Activated CD4-positive, alpha-beta T cell treated with anti-CD3 and anti-CD28 coated beads for 36 hours (primary cell): ENCODE measurements at regions of chr16 and their contacts with region 1.

Region 1: GRCh38 chr16:72501739-72502593 is 330.0 kb upstream of the PMFBP1 start:
- DNase-seq: peak; percentile 67
- ATAC-seq: peak; percentile 68
- H3K4me3 Mint-ChIP-seq: no peak overlapping the region
- H3K27ac Mint-ChIP-seq: no peak overlapping the region
- H3K4me1 Mint-ChIP-seq: no peaks in the 10 kb centered on the region
- H3K27me3 Mint-ChIP-seq: no peaks in the 10 kb centered on the region

Region 2: GRCh38 chr16:71956486-71956885 is 545.5 kb before region 1 on chr16:
- CTCF ChIA-PET with region 1: no interaction called
- POLR2A ChIA-PET with region 1: no interaction called
- intact Hi-C with region 1: no loop called
- DNase-seq: no peak
- ATAC-seq: no peak
- H3K4me3 Mint-ChIP-seq: no peak overlapping the region
- H3K27ac Mint-ChIP-seq: no peak overlapping the region
- H3K4me1 Mint-ChIP-seq: peaks cover 21% of the 10 kb centered on the region
- H3K27me3 Mint-ChIP-seq: no peaks in the 10 kb centered on the region

Region 3: DNA sequence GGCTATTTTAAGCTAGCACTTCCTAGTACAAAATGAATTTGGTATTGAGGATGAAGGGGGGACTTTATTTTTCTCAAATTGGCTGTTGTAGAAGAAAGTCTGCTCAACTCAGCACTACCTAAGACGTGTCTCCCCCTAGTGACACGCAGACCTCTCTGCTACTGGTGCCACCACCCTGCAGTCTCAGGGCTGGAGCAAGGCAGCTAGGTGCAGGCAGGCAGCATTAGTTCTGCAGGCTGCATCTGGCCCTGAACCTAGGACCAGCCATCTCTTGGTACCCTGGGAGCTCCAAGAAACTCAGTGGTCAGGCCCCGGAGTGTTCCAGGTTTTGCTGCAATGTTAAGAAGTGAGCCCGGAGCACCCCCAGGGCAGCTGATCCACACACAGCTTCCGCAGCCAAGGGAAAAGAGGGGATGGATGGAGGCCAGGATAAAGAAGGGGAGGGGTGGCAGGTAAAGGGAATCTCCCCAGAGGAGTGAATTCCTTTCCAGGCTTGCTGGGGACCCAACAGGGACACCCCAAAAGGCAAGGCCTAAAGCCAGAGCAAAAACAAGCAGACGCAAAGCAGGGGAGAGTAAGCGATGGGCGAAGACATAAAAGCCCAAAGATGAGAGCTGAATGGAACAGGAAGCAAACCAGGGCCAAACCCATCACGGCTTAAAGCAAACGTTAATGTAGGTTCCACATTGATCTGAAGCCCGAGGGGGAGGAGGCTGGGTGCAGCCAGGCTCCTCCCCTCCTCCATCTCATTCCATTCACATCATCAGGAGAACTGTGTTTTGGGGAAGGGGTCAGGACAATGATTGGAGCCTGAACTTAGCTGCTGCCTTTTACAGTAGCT is 345.4 kb after region 1 on chr16:
- CTCF ChIA-PET with region 1: no interaction called
- POLR2A ChIA-PET with region 1: no interaction called
- intact Hi-C with region 1: loop called in 1 of 2 experiments (anchors 2 kb)
- DNase-seq: peak; percentile 39
- ATAC-seq: no peak
- H3K4me3 Mint-ChIP-seq: no peak overlapping the region
- H3K27ac Mint-ChIP-seq: no peak overlapping the region
- H3K4me1 Mint-ChIP-seq: peaks cover 8% of the 10 kb centered on the region
- H3K27me3 Mint-ChIP-seq: no peaks in the 10 kb centered on the region

Region 4: GRCh38 chr16:72856797-72857196 is 354.8 kb after region 1 on chr16:
- CTCF ChIA-PET with region 1: interaction called, 5 read pairs
- POLR2A ChIA-PET with region 1: no interaction called
- intact Hi-C with region 1: loop called in 1 of 2 experiments (anchors 1 kb)
- DNase-seq: peak; percentile 48
- ATAC-seq: peak; percentile 49
- H3K4me3 Mint-ChIP-seq: no peak overlapping the region
- H3K27ac Mint-ChIP-seq: no peak overlapping the region
- H3K4me1 Mint-ChIP-seq: no peaks in the 10 kb centered on the region
- H3K27me3 Mint-ChIP-seq: peaks cover 4% of the 10 kb centered on the region

Region 5: DNA sequence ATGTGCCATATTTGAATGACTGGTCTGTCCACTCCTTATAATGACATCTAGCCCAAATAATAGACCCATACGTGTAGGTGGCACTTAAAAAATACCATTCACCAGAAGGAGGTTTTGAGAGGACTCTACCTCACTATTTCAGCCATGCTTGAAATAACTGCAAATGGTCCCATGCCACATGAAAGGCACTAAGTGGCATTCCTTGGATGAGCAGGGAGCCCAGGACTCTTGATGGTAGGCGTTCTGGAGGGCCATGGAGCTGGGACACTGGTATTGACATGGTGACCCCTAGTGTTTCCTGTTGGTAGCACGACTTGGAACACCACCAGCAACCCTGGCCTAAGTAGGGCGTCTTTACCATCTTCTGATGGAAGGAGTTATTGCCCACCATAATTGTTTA is 694.7 kb after region 1 on chr16:
- CTCF ChIA-PET with region 1: no interaction called
- POLR2A ChIA-PET with region 1: no interaction called
- intact Hi-C with region 1: loop called in 1 of 2 experiments (anchors 5 kb)
- DNase-seq: peak; percentile 45
- ATAC-seq: no peak
- H3K4me3 Mint-ChIP-seq: no peak overlapping the region
- H3K27ac Mint-ChIP-seq: no peak overlapping the region
- H3K4me1 Mint-ChIP-seq: no peaks in the 10 kb centered on the region
- H3K27me3 Mint-ChIP-seq: no peaks in the 10 kb centered on the region

Region 6: DNA sequence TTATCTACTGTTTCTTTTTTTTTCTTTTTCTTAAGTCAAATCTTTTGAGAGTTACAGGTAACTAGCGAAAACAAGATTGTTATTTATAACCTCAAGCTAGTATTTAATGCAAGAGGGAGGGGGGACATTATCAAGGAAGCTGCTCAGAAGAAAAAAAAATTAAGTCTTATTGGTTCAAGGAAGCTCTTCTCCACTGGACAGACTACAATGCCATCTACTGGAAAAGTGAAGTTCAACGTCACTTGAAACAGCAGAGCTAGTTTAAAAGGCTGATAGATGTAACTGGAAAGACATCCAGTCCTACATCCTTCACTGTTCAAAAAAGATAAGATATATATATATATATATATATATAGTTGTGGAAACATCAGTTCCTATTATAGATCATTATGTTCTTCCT is 1376.6 kb after region 1 on chr16:
- CTCF ChIA-PET with region 1: no interaction called
- POLR2A ChIA-PET with region 1: no interaction called
- intact Hi-C with region 1: loop called in 1 of 2 experiments (anchors 10 kb)
- DNase-seq: no peak
- ATAC-seq: no peak
- H3K4me3 Mint-ChIP-seq: no peak overlapping the region
- H3K27ac Mint-ChIP-seq: no peak overlapping the region
- H3K4me1 Mint-ChIP-seq: no peaks in the 10 kb centered on the region
- H3K27me3 Mint-ChIP-seq: peaks cover under 1% of the 10 kb centered on the region

Region 7: GRCh38 chr16:73956587-73957494 is 1454.9 kb after region 1 on chr16:
- CTCF ChIA-PET with region 1: no interaction called
- POLR2A ChIA-PET with region 1: no interaction called
- intact Hi-C with region 1: loop called in 1 of 2 experiments (anchors 5 kb)
- DNase-seq: peak; percentile 62
- ATAC-seq: no peak
- H3K4me3 Mint-ChIP-seq: no peak overlapping the region
- H3K27ac Mint-ChIP-seq: no peak overlapping the region
- H3K4me1 Mint-ChIP-seq: no peaks in the 10 kb centered on the region
- H3K27me3 Mint-ChIP-seq: peaks cover 5% of the 10 kb centered on the region